AG04449 (cell line): ENCODE measurements at regions of chr13 and their contacts with region 1.

Region 1: DNA sequence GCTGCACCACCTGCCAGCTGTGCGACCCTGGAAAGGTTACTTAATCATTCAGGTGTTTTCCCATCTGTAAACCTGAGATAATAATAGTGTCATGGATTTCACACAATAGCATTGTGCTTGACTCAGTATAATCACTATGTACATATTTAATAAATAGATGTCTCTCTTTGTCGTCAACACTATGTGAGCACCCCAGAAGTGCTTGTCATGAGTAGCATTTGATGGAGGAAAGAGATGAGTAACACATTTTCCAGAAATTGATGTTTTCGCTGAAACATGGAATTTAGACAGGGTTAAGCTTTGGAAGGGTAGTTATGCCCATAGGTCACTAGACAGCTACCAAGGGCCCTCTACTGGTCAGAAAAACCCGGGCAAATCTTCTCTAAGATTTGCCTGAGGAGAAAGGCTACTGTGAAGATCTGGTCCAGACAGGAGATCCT is 9.5 kb upstream of the MBNL2 start:
- DNase-seq: no peak
- H3K4me3 ChIP-seq: no peak overlapping the region
- CTCF ChIP-seq: peak; percentile 59

Region 2: DNA sequence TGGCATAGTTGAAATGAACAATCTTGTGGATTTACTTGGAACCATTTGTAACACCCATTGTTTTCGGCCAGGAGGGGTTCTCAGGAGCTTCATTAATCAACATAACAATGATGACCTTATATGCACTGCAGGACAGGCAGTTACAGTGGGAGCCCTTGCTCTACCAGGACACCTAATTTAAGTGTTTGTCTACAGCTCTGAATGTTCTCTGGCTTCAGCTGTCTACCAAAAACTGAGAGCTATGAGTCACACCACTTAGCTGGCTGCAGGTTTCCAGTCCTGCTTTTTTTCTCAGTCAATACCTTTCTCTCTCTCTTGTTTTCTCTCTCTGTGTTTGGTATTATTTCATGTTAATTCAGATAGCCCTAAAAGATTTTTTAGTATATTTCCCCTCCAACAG is 95.9 kb before region 1 on chr13:
- CTCF ChIA-PET with region 1: interaction called, 161 read pairs
- POLR2A ChIA-PET with region 1: no interaction called
- DNase-seq: no peak
- H3K4me3 ChIP-seq: no peak overlapping the region
- CTCF ChIP-seq: no peak